PC-3 (cell line): ENCODE measurements at regions of chr11 and their contacts with region 1.

Region 1: GRCh38 chr11:102139081-102139498 is 28.8 kb downstream of the YAP1 start:
- DNase-seq: peak; percentile 89
- ATAC-seq: peak; percentile 80
- H3K4me3 ChIP-seq: peak overlapping the region; percentile 48
- H3K27ac ChIP-seq: peak overlapping the region; percentile 85
- H3K4me1 ChIP-seq: peaks cover 25% of the 10 kb centered on the region
- H3K27me3 ChIP-seq: no peaks in the 10 kb centered on the region
- CTCF ChIP-seq: no peak

Region 2: DNA sequence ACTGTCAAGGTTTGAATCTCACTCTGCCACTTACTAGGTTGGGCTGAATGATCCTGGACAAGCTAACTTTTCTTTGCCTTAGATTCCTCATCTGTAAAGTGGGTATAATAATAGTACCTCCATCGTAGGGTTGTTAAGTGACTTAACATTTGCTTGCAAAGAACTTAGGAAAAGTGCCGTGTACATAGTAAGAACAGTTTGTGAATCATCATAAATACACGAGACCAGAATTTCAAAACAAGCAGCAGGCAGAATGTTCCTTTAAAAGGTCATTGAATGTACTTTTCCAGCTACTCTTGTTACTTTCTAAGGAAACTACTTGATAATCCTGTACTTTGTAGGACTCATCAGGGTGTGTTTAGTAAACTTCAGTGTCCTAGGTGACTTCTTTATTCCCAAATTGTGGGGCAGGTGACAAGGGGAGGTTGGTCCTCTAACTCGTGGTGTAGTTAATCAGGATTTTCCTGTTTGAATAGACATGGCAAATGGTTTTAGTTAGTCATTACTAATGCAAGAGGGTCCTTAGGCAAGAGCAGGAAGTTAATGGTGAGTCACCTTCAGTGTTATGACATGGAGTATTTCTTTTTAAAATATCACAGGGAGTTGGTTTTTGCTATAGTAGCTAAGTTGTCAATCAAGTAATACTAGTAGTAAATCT is 39.0 kb after region 1 on chr11:
- CTCF ChIA-PET with region 1: no interaction called
- POLR2A ChIA-PET with region 1: no interaction called
- intact Hi-C with region 1: loop called (anchors 2 kb)
- DNase-seq: peak; percentile 99
- ATAC-seq: peak; percentile 90
- H3K4me3 ChIP-seq: peak overlapping the region; percentile 26; the same call in 1 of the 2 replicates
- H3K27ac ChIP-seq: peak overlapping the region; percentile 80
- H3K4me1 ChIP-seq: peaks cover 27% of the 10 kb centered on the region
- H3K27me3 ChIP-seq: no peaks in the 10 kb centered on the region
- CTCF ChIP-seq: no peak